CD4-positive, alpha-beta T cell (primary cell): ENCODE measurements at regions of chr4 and their contacts with region 1.

Region 1: GRCh38 chr4:74423104-74423503 is 21.8 kb upstream of the AREG start:
- DNase-seq: no peak
- ATAC-seq: no peak
- H3K4me3 ChIP-seq: no peak overlapping the region
- H3K4me3 Mint-ChIP-seq: no peak overlapping the region
- H3K27ac ChIP-seq: no peak overlapping the region
- H3K27ac Mint-ChIP-seq: no peak overlapping the region
- H3K4me1 ChIP-seq: no peaks in the 10 kb centered on the region
- H3K4me1 Mint-ChIP-seq: no peaks in the 10 kb centered on the region
- H3K27me3 ChIP-seq: no peaks in the 10 kb centered on the region
- H3K27me3 Mint-ChIP-seq: peaks cover 14% of the 10 kb centered on the region
- CTCF ChIP-seq: no peak

Region 2: GRCh38 chr4:74464291-74464690 is 41.2 kb after region 1 on chr4:
- CTCF ChIA-PET with region 1: no interaction called
- POLR2A ChIA-PET with region 1: no interaction called
- intact Hi-C with region 1: loop called in 1 of 2 experiments (anchors 5 kb)
- DNase-seq: no peak
- ATAC-seq: no peak
- H3K4me3 ChIP-seq: no peak overlapping the region
- H3K4me3 Mint-ChIP-seq: no peak overlapping the region
- H3K27ac ChIP-seq: no peak overlapping the region
- H3K27ac Mint-ChIP-seq: no peak overlapping the region
- H3K4me1 ChIP-seq: no peaks in the 10 kb centered on the region
- H3K4me1 Mint-ChIP-seq: no peaks in the 10 kb centered on the region
- H3K27me3 ChIP-seq: no peaks in the 10 kb centered on the region
- H3K27me3 Mint-ChIP-seq: peaks cover 4% of the 10 kb centered on the region
- CTCF ChIP-seq: no peak